ENCODE measurements at regions of chr5 and their contacts with region 1.

Region 1: DNA sequence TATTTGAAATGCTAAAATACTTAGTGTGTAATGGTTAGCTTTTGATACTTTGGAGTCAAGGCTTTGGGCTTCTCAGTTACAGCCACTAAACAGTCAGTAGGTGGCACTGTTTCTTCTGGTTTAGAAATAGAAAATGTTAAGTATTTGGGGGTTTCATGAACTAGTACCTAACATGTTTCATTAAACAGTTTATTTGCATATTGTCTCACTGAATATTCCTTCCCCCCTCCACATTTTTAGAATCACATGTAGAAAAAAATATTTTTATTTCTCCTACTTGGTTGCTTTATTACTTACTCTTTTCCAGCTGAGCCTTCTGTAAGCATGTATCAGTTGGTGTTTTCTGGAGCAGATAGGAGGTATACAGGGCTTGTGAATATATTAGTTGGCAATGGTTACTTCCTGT is 48.0 kb downstream of the IPO11 start:
- DNase-seq: peak in 4 of 5 donors; percentile 27 to 32 (median 30)
- H3K4me3 ChIP-seq: no peak overlapping the region
- H3K4me3 Mint-ChIP-seq: no peak overlapping the region
- H3K27ac ChIP-seq: no peak overlapping the region
- H3K27ac Mint-ChIP-seq: no peak overlapping the region
- H3K4me1 ChIP-seq: no peaks in the 10 kb centered on the region
- H3K4me1 Mint-ChIP-seq: peaks cover 0 to 1% (median 0%) of the 10 kb centered on the region in 4 donors
- H3K27me3 ChIP-seq: no peaks in the 10 kb centered on the region
- H3K27me3 Mint-ChIP-seq: no peaks in the 10 kb centered on the region

Region 2: GRCh38 chr5:62385131-62385530 is 75.5 kb before region 1 on chr5:
- CTCF ChIA-PET with region 1: no interaction called
- POLR2A ChIA-PET with region 1: no interaction called
- intact Hi-C with region 1: no loop called
- DNase-seq: no peak
- H3K4me3 ChIP-seq: no peak overlapping the region
- H3K4me3 Mint-ChIP-seq: no peak overlapping the region
- H3K27ac ChIP-seq: no peak overlapping the region
- H3K27ac Mint-ChIP-seq: peak overlapping the region in 2 of 7 donors; percentile 10 to 29
- H3K4me1 ChIP-seq: no peaks in the 10 kb centered on the region
- H3K4me1 Mint-ChIP-seq: no peaks in the 10 kb centered on the region
- H3K27me3 ChIP-seq: no peaks in the 10 kb centered on the region
- H3K27me3 Mint-ChIP-seq: no peaks in the 10 kb centered on the region

Region 3: DNA sequence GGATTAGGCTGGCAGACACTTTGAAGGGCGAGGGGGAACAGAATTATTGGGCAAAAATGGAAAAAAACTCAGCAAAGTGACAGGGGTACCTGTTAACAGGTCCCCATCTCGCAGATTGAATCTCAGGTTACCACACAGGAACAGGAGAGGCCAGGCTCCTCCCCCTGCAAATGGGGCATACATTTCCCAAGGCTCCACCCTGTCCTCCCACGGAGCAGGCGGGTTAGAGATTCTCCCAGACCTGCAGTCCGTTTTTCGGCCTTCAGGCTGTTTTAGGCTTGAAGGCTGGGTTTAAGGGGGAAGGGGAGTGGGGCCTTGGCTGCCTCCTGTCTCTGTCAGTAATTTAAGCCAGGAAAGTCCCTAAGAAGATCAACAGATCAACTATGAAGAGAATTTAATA is 160.7 kb after region 1 on chr5:
- CTCF ChIA-PET with region 1: no interaction called
- POLR2A ChIA-PET with region 1: no interaction called
- intact Hi-C with region 1: loop called (anchors 10 kb)
- DNase-seq: no peak
- H3K4me3 ChIP-seq: no peak overlapping the region
- H3K4me3 Mint-ChIP-seq: no peak overlapping the region
- H3K27ac ChIP-seq: no peak overlapping the region
- H3K27ac Mint-ChIP-seq: peak overlapping the region in 1 of 7 donors; percentile 53
- H3K4me1 ChIP-seq: no peaks in the 10 kb centered on the region
- H3K4me1 Mint-ChIP-seq: peaks cover 0 to 5% (median 0%) of the 10 kb centered on the region in 4 donors
- H3K27me3 ChIP-seq: no peaks in the 10 kb centered on the region
- H3K27me3 Mint-ChIP-seq: no peaks in the 10 kb centered on the region

Region 4: GRCh38 chr5:62718368-62718767 is 257.8 kb after region 1 on chr5:
- CTCF ChIA-PET with region 1: interaction called, 3 read pairs
- POLR2A ChIA-PET with region 1: no interaction called
- intact Hi-C with region 1: loop called (anchors 2 kb)
- DNase-seq: no peak
- H3K4me3 ChIP-seq: no peak overlapping the region
- H3K4me3 Mint-ChIP-seq: no peak overlapping the region
- H3K27ac ChIP-seq: no peak overlapping the region
- H3K27ac Mint-ChIP-seq: no peak overlapping the region
- H3K4me1 ChIP-seq: no peaks in the 10 kb centered on the region
- H3K4me1 Mint-ChIP-seq: no peaks in the 10 kb centered on the region
- H3K27me3 ChIP-seq: no peaks in the 10 kb centered on the region
- H3K27me3 Mint-ChIP-seq: peaks cover 23 to 24% of the 10 kb centered on the region in 2 donors

Region 5: DNA sequence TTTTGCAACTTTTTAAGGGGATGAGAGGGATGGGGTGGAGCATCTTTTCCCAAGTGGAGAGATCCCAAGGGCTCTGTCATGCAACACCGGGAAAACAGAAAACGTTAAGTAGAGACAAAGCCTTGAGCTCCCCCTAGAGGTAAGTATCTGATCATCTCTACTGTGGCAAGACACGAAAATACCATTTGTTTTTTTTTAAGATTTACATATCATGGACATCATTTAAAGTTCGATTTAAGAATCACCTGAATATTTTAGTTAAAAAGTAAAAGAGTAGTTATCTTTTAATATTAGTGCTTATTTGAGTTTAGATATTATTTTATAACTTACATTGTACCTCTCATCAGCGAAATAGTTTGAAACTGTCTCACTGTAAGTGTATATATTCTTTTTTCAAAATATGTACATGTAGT is 318.4 kb after region 1 on chr5:
- CTCF ChIA-PET with region 1: interaction called, 12 read pairs
- POLR2A ChIA-PET with region 1: no interaction called
- intact Hi-C with region 1: no loop called
- DNase-seq: peak in 4 of 5 donors; percentile 23 to 32 (median 28)
- H3K4me3 ChIP-seq: no peak overlapping the region
- H3K4me3 Mint-ChIP-seq: peak overlapping the region in 2 of 8 donors; percentile 25 to 41
- H3K27ac ChIP-seq: no peak overlapping the region
- H3K27ac Mint-ChIP-seq: no peak overlapping the region
- H3K4me1 ChIP-seq: no peaks in the 10 kb centered on the region
- H3K4me1 Mint-ChIP-seq: no peaks in the 10 kb centered on the region
- H3K27me3 ChIP-seq: no peaks in the 10 kb centered on the region
- H3K27me3 Mint-ChIP-seq: no peaks in the 10 kb centered on the region

Region 6: DNA sequence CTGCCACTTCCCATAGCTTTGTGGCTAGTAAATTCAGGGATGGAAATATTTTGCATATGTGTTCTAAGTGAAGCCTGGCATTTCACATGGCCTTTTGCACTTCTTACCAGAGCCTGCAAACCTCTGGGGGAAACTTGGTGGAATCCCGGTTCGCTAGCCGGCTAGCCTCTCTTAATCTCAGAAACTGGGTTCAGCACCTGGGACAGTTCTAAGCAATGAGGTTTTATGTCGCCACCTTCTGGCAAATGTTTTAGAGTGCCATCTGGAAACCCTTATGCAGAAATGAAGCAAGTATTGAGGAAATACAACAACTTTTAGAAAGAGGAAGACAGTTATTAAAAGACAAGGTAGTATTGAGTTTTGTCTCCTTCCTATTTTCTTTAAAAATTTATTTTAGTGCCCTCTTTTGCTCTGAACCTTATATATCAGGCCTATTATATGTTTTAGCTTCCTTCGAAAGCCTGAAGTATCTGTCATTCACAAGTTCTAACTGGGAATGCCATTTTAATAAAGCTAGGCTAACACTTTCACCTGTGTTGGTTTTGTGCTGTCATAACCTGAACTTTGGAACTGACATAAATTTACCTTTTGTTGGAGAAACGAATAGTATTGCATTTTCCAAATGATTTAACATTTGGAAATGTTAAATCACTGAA is 1502.6 kb after region 1 on chr5:
- CTCF ChIA-PET with region 1: no interaction called
- POLR2A ChIA-PET with region 1: no interaction called
- intact Hi-C with region 1: loop called (anchors 10 kb)
- DNase-seq: no peak
- H3K4me3 ChIP-seq: no peak overlapping the region
- H3K4me3 Mint-ChIP-seq: no peak overlapping the region
- H3K27ac ChIP-seq: no peak overlapping the region
- H3K27ac Mint-ChIP-seq: no peak overlapping the region
- H3K4me1 ChIP-seq: no peaks in the 10 kb centered on the region
- H3K4me1 Mint-ChIP-seq: no peaks in the 10 kb centered on the region
- H3K27me3 ChIP-seq: no peaks in the 10 kb centered on the region
- H3K27me3 Mint-ChIP-seq: peaks cover 8 to 21% of the 10 kb centered on the region in 2 donors

Measured in CD4-positive, alpha-beta memory T cell (primary cell).